ENCODE measurements at regions of chr1 and their contacts with region 1.

Region 1: GRCh38 chr1:180515864-180516388 is 13.5 kb upstream of the ACBD6 start:
- DNase-seq: peak in 1 of 3 donors; percentile 68
- ATAC-seq: peak; percentile 100
- H3K4me3 ChIP-seq: no peak overlapping the region
- H3K27ac ChIP-seq: no peak overlapping the region
- H3K4me1 ChIP-seq: no peaks in the 10 kb centered on the region
- H3K27me3 ChIP-seq: no peaks in the 10 kb centered on the region
- CTCF ChIP-seq: peak; percentile 84 to 88 (median 86)
- POLR2A ChIP-seq: no peak

Region 2: DNA sequence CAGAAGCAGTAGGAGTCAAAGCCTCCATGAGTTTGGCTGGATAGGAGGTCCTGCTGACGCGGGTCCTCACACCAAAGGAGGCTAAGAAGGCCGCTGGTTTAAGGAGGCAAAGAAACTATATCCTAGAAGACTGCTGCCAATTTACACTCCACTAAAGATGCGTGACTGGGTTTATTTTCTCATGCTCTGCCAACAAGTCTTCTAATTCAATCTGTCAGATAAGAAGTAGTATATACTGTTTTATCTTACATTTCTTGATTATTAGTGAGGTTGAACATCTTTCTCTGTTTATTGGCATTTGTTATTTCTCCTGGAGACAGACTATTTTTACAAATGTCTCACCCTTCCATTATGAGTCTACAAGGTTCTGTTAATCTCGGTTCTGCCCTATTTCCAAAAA is 47.6 kb before region 1 on chr1:
- intact Hi-C with region 1: no loop called
- DNase-seq: no peak
- ATAC-seq: no peak
- H3K4me3 ChIP-seq: no peak overlapping the region
- H3K27ac ChIP-seq: no peak overlapping the region
- H3K4me1 ChIP-seq: no peaks in the 10 kb centered on the region
- H3K27me3 ChIP-seq: no peaks in the 10 kb centered on the region
- CTCF ChIP-seq: no peak
- POLR2A ChIP-seq: no peak

Region 3: DNA sequence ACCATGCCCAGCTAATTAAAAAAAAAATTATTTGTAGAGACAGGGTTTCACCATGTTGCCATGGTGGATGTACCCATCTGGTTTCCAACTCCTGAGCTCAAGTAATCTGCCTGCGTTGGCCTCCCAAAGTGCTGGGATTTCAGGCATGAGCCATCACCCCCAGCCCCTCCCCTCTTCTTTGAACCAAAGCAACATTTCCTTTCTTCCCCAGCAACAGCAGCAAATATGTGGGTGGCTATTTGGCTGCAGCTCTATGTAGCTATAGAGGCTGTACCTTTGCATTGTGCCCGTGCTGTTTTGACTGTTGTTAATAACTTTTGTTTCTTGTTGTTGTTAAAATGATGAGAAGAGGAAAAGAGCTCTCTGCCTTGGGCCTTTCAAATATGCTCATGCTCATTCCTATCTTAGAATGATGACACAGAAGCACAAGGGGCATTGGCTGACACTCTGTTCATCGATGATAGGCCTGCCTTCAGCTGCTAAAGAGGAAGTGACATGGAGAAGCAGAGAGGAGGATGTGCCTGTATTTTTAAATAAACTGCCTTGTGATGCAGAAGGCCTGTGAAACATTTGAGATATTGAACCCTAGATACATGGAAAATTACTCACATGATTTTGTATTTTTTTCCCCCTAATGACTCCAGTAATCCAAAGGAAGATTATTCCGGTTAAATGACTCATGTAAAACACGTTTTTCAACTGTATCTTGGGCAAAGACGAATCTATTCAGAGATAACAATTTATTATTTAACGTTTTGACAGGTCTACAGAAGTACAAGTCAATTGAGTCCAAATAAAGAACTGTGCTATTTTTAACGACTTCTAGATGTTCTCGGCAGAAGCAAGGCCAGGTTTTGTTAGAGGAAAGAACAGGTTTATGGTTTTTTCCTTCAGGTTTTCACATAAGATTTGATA is 95.3 kb after region 1 on chr1:
- intact Hi-C with region 1: no loop called
- DNase-seq: no peak
- ATAC-seq: peak in 3 of 4 donors; percentile 42 to 73 (median 47)
- H3K4me3 ChIP-seq: no peak overlapping the region
- H3K27ac ChIP-seq: peak overlapping the region in 1 of 3 donors; percentile 14
- H3K4me1 ChIP-seq: no peaks in the 10 kb centered on the region
- H3K27me3 ChIP-seq: no peaks in the 10 kb centered on the region
- CTCF ChIP-seq: no peak
- POLR2A ChIP-seq: no peak

Region 4: GRCh38 chr1:180652792-180653191 is 136.9 kb after region 1 on chr1:
- intact Hi-C with region 1: no loop called
- DNase-seq: no peak
- ATAC-seq: no peak
- H3K4me3 ChIP-seq: no peak overlapping the region
- H3K27ac ChIP-seq: no peak overlapping the region
- H3K4me1 ChIP-seq: no peaks in the 10 kb centered on the region
- H3K27me3 ChIP-seq: no peaks in the 10 kb centered on the region
- CTCF ChIP-seq: no peak
- POLR2A ChIP-seq: no peak

Region 5: DNA sequence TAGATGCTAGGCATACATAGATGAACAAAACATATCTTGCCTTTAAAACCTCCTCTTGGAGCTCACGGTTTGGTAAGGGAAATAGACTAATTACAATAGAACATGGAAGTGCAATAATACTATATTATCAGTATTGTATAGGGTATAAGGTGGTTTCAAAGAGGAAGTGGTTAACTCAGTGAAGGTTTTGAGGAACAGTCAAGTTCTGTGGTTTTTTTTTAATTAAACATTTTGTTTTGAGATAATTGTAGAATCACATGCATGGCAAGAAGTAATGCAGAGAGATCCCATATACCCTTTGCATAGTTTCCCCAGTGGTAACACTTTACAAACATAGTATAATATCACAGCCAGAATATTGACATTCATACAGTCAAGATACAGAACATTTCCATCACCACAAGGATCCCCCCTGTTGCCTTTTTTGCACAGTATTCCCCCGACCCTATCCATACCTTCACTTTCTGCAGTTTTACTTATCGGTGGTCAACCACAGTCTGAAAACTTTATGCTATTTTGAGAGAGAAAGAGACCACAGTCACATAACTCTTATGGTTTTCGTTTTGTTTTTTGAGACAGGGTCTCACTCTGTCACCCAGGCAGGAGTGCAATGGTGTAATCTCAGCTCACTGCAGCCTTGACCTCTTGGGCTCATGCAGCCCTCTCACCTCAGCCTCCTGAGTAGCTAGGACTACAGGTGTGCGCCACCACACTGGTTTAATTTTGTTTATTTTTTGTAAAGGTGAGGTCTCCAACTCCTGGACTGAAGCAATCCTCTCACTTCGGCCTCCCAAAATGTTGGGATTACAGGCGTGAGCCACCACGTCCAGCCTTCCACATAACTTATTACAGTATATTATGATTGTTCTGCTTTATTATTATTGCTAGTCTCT is 336.3 kb after region 1 on chr1:
- intact Hi-C with region 1: loop called in 1 of 2 experiments (anchors 10 kb)
- DNase-seq: no peak
- ATAC-seq: no peak
- H3K4me3 ChIP-seq: no peak overlapping the region
- H3K27ac ChIP-seq: no peak overlapping the region
- H3K4me1 ChIP-seq: no peaks in the 10 kb centered on the region
- H3K27me3 ChIP-seq: no peaks in the 10 kb centered on the region
- CTCF ChIP-seq: no peak
- POLR2A ChIP-seq: no peak

Region 6: GRCh38 chr1:180863158-180863775 is 347.3 kb after region 1 on chr1:
- intact Hi-C with region 1: loop called (anchors 10 kb)
- DNase-seq: no peak
- ATAC-seq: peak; percentile 52 to 79 (median 74)
- H3K4me3 ChIP-seq: no peak overlapping the region
- H3K27ac ChIP-seq: no peak overlapping the region
- H3K4me1 ChIP-seq: peaks cover 0 to 17% (median 4%) of the 10 kb centered on the region in 4 donors
- H3K27me3 ChIP-seq: no peaks in the 10 kb centered on the region
- CTCF ChIP-seq: peak; percentile 70 to 79 (median 72)
- POLR2A ChIP-seq: no peak